GM10248 (cell line): ENCODE measurements at regions of chr17 and their contacts with region 1.

Region 1: DNA sequence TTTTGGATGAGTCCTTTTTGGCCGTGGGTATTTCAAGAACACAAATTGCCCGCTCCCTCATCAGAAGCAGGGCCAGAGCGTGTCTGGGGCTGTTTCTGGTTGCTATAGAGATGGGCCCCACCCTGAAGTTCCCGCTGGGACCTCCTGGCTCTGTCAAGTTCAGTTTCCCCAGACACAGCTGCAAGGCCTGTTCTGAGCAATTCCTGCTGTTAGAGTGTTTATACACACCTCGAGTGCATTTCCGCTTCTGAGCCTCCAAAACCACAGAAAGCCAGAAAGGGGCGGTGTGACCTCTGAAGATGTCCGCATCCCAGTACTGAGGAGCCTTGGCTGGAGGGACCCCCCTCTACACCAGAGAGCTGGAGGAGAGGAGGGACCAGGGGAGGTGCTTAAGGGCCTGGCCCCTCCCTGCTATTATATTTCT is 9.3 kb upstream of the WBP2 start:
- DNase-seq: peak; percentile 79
- CTCF ChIP-seq: no peak

Region 2: DNA sequence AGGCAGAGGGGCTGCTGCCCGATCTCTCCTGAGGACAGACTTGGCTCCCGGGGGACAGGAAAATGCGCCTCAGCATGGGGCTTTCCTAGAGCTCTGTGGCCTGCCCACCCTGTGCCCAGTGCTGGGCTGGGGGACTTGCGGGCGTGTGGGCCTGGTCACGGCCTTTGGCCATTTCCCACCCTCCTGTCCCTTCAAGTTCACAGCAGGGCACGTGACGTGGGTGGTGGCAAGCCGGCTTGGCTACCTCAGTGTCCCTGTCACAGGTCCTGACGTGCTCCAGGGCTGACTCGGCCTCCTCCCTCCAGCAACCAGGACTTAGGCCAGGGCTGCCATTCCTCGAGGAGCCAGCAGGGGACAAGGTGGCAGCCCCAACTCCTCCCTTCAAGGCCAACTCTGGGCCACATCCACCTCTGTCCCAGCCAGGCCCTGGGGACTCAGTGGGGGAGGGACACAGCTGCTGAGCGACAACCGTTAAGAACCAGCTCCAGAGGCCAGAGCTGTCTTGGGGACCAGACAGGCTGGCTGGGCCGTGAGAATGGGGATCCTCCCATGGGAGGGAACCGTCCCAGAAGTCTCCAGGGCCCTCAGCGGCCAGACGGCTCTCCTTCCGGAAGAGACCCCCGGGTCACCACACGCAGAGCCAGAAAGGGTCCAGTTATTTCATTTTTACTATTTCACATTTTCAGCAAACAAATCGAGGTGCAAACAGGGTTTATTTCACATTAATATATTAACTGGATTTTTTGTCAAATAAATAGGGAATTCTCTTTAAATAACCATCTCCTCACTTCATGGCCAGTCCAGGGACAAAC is 19.2 kb before region 1 on chr17:
- CTCF ChIA-PET with region 1: interaction called, 38 read pairs
- POLR2A ChIA-PET with region 1: interaction called, 4 read pairs
- DNase-seq: peak; percentile 91
- CTCF ChIP-seq: peak; percentile 69

Region 3: DNA sequence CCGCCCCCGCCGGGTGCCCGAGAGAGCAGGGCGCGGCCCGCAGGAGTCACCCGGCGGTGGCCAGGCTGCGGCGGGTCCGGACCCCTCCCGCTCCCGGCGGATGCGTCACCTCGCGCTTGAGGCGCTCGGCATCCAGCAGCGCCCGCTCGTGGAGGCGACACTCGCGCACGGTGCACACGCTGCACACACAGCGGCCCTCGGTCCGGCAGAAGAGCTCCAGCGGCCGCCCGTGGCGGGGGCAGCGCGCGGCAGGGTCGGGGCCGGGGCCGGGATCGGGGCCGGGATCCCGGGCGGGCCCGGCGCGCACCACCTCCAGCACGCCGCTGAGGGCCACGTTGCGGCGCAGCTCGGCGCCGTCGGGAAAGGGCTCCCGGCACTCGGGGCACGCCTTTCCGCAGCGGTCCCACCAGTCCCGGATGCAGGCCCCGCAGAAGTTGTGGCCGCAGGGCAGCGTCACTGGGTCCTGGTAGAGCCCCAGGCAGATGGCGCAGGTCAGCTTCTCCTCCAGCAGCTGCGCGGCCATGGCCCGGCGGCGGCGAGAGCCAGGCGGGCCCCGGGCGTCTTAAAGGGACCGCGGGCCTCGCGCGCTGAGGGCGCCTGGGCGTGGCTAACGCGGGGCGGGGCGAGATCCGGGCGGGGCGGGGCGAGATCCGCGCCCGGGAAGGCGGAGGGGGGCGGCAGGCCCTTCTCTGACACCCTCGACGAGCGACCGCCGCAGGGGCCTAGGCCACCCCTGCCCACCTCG is 32.1 kb after region 1 on chr17 and contains the start of gene TRIM65:
- CTCF ChIA-PET with region 1: interaction called, 11 read pairs
- POLR2A ChIA-PET with region 1: no interaction called
- DNase-seq: peak; percentile 92
- CTCF ChIP-seq: peak; percentile 69

Region 4: DNA sequence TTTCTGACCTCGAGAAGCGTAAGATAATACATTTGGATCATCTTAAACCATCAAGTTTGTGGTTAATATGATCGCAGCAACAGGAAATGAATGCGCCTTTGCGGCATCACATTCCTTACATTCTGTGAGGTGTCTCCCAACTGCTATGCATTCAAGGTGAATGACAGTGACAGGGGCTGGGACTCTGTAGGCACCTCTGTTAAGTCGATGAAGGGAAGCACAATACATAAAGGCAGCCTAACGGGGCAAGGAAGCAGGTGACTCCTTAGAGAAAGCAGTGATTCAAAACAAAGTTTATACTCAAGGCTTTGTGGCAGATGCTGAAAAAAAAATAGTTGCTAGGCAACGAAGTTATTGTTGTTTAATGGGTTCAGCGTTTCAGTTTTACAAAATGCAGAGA is 184.3 kb after region 1 on chr17:
- CTCF ChIA-PET with region 1: no interaction called
- POLR2A ChIA-PET with region 1: no interaction called
- DNase-seq: no peak
- CTCF ChIP-seq: no peak